ENCODE measurements at regions of chr9 and their contacts with region 1.

Region 1: GRCh38 chr9:693201-694091 is 148.1 kb upstream of the DMRT1 start:
- DNase-seq: no peak
- H3K4me3 ChIP-seq: no peak overlapping the region
- H3K27ac ChIP-seq: peak overlapping the region; percentile 47; the same call in 1 of the 2 replicates
- H3K4me1 ChIP-seq: peaks cover 47% of the 10 kb centered on the region
- H3K27me3 ChIP-seq: no peaks in the 10 kb centered on the region
- CTCF ChIP-seq: no peak

Region 2: DNA sequence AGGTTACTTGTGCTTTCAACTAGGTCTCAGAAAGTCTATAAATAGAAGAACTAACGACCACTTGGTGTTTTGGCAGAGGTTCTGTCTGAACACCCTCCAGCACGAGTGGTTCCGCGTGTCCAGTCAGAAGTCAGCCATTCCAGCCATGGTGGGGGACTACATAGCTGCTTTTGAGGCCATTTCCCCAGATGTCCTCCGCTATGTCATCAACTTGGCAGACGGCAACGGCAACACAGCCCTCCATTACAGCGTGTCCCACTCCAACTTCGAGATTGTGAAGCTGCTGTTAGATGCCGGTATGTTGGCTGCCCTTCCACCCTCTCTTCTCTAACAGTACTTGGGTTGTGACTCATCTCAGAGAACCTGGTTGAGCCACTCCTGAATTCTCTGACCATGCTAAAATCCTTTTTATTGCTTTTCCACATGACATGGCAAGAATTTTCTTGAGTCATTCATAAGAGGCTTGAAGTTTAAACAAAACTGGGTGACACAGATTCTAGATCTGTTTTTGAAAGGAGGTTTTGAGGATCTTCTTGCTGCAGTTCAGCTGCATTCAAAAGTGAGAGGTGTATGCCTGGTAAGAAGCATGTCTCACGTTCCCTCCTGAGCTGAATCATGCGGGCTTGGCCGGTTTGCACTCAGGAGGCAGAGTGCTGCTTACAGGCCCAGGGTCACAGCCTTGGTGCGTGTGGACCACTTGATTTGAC is 44.9 kb after region 1 on chr9:
- CTCF ChIA-PET with region 1: no interaction called
- POLR2A ChIA-PET with region 1: no interaction called
- intact Hi-C with region 1: no loop called
- DNase-seq: peak; percentile 37 to 91
- H3K4me3 ChIP-seq: no peak overlapping the region
- H3K27ac ChIP-seq: peak overlapping the region; percentile 90
- H3K4me1 ChIP-seq: peaks cover 22% of the 10 kb centered on the region
- H3K27me3 ChIP-seq: no peaks in the 10 kb centered on the region
- CTCF ChIP-seq: no peak

Region 3: DNA sequence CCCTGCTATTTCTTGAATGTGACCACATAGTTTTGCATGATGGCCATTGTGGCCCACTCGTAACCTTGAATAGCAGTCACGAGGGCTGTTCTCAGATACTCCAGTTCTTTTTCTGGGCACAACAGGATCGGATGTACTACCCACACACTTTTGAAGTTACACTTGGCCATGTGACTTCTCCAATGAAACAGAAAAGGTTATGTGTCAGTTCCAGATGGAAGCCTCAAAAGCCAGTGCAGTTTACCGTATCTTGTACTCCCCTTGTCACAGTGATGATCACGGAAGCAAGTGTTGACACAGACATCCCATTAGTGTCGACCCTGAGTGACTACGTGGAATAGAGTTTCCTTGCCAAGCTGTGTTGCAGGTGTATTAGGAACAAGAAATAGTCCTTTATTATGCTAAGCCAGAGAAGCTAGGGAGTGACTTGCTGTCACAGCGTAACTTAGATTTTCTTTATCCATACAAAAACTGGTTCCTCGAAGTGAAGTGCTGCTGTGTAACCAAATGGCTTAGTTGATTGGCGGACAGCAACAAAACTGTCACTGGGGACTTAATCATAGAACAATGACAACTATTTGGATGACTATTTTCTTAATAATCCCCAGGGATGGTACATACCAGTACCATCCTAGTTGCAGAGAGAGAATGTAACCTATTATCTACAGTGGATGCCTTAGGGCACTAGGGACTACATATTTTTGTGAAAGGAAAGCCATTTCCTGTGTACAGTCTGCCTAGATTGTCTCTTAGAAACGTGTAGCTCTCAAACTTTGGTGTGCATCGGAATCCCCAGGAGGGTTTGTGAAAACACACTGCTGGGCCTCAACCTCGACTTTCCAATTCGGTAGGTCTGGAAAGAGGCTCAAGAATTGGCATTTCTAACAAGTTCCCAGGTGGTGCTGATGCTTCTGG is 57.9 kb after region 1 on chr9:
- CTCF ChIA-PET with region 1: no interaction called
- POLR2A ChIA-PET with region 1: no interaction called
- intact Hi-C with region 1: loop called (anchors 5 kb)
- DNase-seq: peak; percentile 2 to 37
- H3K4me3 ChIP-seq: no peak overlapping the region
- H3K27ac ChIP-seq: peak overlapping the region; percentile 32; the same call in 1 of the 2 replicates
- H3K4me1 ChIP-seq: 0 out of 2 replicates have a peak, but pooled peaks cover 16% of the 10 kb centered on the region
- H3K27me3 ChIP-seq: no peaks in the 10 kb centered on the region
- CTCF ChIP-seq: no peak

Measured in PC-9 (cell line).